PC-9 (cell line): ENCODE measurements at regions of chr2 and their contacts with region 1.

Region 1: GRCh38 chr2:226799181-226799975 is at the start of gene IRS1:
- DNase-seq: peak; percentile 57 to 76
- H3K4me3 ChIP-seq: peak within 1 kb of the TSS; percentile 95
- H3K27ac ChIP-seq: peak within 1 kb of the TSS; percentile 61
- H3K4me1 ChIP-seq: peaks cover 45% of the 10 kb centered on the region
- H3K27me3 ChIP-seq: no peaks in the 10 kb centered on the region
- CTCF ChIP-seq: no peak
- total RNA-seq, gene IRS1: 26.2 and 28.6 TPM in 2 replicates

Region 2: DNA sequence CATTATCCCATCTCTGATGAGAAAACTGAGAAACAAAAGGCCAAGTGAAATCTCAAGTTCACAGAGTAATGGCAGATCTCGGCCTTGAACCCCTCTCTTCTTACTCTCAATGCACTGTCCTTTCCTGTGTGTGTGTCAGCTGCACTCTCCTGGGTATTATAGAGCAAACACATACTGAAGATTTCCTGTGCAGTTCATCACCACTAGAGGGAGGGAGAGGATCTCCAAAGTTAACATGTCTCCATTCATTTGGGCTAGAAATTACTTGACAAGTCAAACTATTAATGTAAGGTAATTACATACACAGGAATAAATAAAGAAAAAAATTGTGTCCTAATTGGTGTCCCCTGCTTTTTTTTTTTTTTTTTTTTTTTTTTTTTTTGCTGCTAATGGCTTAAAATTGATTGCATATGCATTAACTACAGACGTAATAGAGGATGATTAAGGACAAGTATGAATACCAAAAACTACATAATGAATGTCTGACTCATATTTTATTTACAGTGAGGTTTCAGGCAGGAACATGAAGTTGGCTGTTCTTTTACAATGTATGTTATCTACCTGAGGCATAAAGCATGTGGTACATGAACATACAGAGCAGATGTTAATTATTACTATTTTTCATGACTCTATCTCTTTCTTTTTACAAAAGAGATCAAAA is 1130.6 kb before region 1 on chr2:
- CTCF ChIA-PET with region 1: interaction called, 4 read pairs
- POLR2A ChIA-PET with region 1: no interaction called
- intact Hi-C with region 1: loop called (anchors 1 kb)
- DNase-seq: peak; percentile 38 to 65
- H3K4me3 ChIP-seq: no peak overlapping the region
- H3K27ac ChIP-seq: no peak overlapping the region
- H3K4me1 ChIP-seq: no peaks in the 10 kb centered on the region
- H3K27me3 ChIP-seq: no peaks in the 10 kb centered on the region
- CTCF ChIP-seq: peak; percentile 97

Region 3: GRCh38 chr2:226118471-226119430 is 680.6 kb before region 1 on chr2:
- CTCF ChIA-PET with region 1: no interaction called
- POLR2A ChIA-PET with region 1: interaction called, 10 read pairs
- intact Hi-C with region 1: loop called (anchors 2 kb)
- DNase-seq: peak; percentile 33 to 92
- H3K4me3 ChIP-seq: peak overlapping the region; percentile 27; the same call in 1 of the 2 replicates
- H3K27ac ChIP-seq: peak overlapping the region; percentile 93
- H3K4me1 ChIP-seq: peaks cover 64% of the 10 kb centered on the region
- H3K27me3 ChIP-seq: no peaks in the 10 kb centered on the region
- CTCF ChIP-seq: no peak

Region 4: GRCh38 chr2:226376516-226377180 is 422.7 kb before region 1 on chr2:
- CTCF ChIA-PET with region 1: no interaction called
- POLR2A ChIA-PET with region 1: no interaction called
- intact Hi-C with region 1: no loop called
- DNase-seq: no peak
- H3K4me3 ChIP-seq: no peak overlapping the region
- H3K27ac ChIP-seq: no peak overlapping the region
- H3K4me1 ChIP-seq: no peaks in the 10 kb centered on the region
- H3K27me3 ChIP-seq: no peaks in the 10 kb centered on the region
- CTCF ChIP-seq: no peak

Region 5: GRCh38 chr2:226483745-226484619 is 315.4 kb before region 1 on chr2:
- CTCF ChIA-PET with region 1: interaction called, 10 read pairs
- POLR2A ChIA-PET with region 1: interaction called, 4 read pairs
- intact Hi-C with region 1: no loop called
- DNase-seq: peak; percentile 50 to 68
- H3K4me3 ChIP-seq: no peak overlapping the region
- H3K27ac ChIP-seq: no peak overlapping the region
- H3K4me1 ChIP-seq: peaks cover 20% of the 10 kb centered on the region
- H3K27me3 ChIP-seq: no peaks in the 10 kb centered on the region
- CTCF ChIP-seq: no peak

Region 6: GRCh38 chr2:226673314-226673723 is 126.1 kb before region 1 on chr2:
- CTCF ChIA-PET with region 1: no interaction called
- POLR2A ChIA-PET with region 1: no interaction called
- intact Hi-C with region 1: loop called (anchors 2 kb)
- DNase-seq: peak; percentile 92 to 97
- H3K4me3 ChIP-seq: no peak overlapping the region
- H3K27ac ChIP-seq: peak overlapping the region; percentile 66
- H3K4me1 ChIP-seq: peaks cover 34% of the 10 kb centered on the region
- H3K27me3 ChIP-seq: no peaks in the 10 kb centered on the region
- CTCF ChIP-seq: no peak

Region 7: GRCh38 chr2:227106845-227107759 is 307.7 kb after region 1 on chr2:
- CTCF ChIA-PET with region 1: no interaction called
- POLR2A ChIA-PET with region 1: no interaction called
- intact Hi-C with region 1: loop called (anchors 2 kb)
- DNase-seq: peak; percentile 37 to 50
- H3K4me3 ChIP-seq: no peak overlapping the region
- H3K27ac ChIP-seq: no peak overlapping the region
- H3K4me1 ChIP-seq: no peaks in the 10 kb centered on the region
- H3K27me3 ChIP-seq: no peaks in the 10 kb centered on the region
- CTCF ChIP-seq: peak; percentile 81